GM18951 (cell line): ENCODE measurements at regions of chr20 and their contacts with region 1.

Region 1: DNA sequence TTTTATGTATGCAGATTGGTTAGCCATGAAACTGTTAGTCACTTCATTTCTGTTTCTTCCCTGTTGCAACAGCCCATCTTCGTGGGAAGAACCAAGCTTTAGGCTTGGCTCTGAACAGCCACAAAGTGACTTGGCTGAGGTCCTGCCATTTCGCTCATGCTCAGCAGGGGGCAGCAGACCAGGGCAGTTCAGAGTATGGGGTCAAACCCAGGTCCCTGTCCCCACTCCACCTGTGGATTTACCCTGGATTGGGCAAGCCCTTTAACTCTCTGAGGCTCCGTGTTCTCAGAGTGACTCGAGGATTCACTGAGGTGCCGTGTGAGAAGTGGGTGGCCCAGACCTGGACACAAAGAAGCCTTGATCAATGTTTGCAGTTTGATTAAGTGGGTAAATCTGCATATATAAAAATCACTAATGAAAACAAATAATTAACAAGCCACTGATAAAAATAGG is 19.8 kb upstream of the MAP1LC3A start:
- POLR2A ChIP-seq: no peak

Region 2: GRCh38 chr20:33897313-33897912 is 641.3 kb before region 1 on chr20:
- in situ Hi-C with region 1: no loop called
- POLR2A ChIP-seq: no peak

Region 3: GRCh38 chr20:34704177-34705007 is 165.7 kb after region 1 on chr20 and contains the start of gene TP53INP2:
- in situ Hi-C with region 1: loop called (anchors 10 kb)
- POLR2A ChIP-seq: peak; percentile 62